ENCODE measurements at regions of chr11 and their contacts with region 1.

Region 1: DNA sequence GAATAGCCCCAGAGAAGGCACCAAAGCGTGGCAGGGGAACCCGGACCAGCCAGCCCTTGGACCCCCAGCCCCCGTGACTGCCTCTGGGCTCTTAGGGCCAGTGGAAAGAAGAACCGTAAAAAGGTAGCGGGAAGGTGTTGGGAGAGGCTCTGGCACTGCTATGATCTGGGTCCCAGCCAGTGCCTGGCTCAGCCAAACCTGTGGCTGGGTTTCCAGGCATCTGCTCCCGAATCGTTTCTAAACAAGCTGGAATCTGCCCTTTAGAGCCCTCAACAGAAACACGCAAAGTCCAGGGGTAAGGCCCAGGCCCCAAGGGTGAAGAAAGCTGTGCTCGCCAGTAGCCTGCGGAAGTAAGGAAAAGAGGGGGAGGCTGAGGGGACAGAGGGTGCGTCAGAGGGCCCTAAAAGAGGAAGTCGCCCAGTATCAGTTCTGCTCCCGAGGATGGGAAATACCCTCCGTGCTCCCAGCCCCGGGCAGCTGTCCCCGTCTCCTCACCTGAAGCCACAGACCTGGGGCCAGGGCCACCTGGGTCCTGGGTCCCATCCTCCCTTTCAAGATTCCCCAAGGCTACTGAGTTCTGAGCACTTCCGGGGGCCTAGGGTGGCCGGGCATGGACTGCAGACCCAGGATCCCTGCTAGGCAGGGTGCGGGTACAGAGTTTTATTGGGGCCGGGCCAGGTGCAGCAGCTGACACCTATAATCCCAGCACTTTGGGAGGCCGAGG is 24.7 kb downstream of the IL10RA start:
- DNase-seq: no peak
- H3K4me3 Mint-ChIP-seq: no peak overlapping the region
- H3K27ac Mint-ChIP-seq: no peak overlapping the region
- H3K4me1 Mint-ChIP-seq: peaks cover 98% of the 10 kb centered on the region
- H3K27me3 Mint-ChIP-seq: no peaks in the 10 kb centered on the region

Region 2: GRCh38 chr11:118021146-118021545 is 10.2 kb after region 1 on chr11:
- CTCF ChIA-PET with region 1: interaction called, 4 read pairs
- POLR2A ChIA-PET with region 1: interaction called, 19 read pairs
- DNase-seq: no peak
- H3K4me3 Mint-ChIP-seq: no peak overlapping the region
- H3K27ac Mint-ChIP-seq: no peak overlapping the region
- H3K4me1 Mint-ChIP-seq: peaks cover 12% of the 10 kb centered on the region
- H3K27me3 Mint-ChIP-seq: peaks cover 4% of the 10 kb centered on the region

Region 3: GRCh38 chr11:118046051-118046963 is 35.4 kb after region 1 on chr11:
- CTCF ChIA-PET with region 1: interaction called, 192 read pairs
- POLR2A ChIA-PET with region 1: interaction called, 681 read pairs
- DNase-seq: peak; percentile 44
- H3K4me3 Mint-ChIP-seq: no peak overlapping the region
- H3K27ac Mint-ChIP-seq: peak overlapping the region; percentile 78
- H3K4me1 Mint-ChIP-seq: peaks cover 90% of the 10 kb centered on the region
- H3K27me3 Mint-ChIP-seq: no peaks in the 10 kb centered on the region